ENCODE measurements at regions of chrX and their contacts with region 1.

Region 1: GRCh38 chrX:130575831-130576389 is 174.1 kb downstream of the RBMX2 start:
- DNase-seq: peak; percentile 21
- H3K4me3 Mint-ChIP-seq: no peak overlapping the region
- H3K27ac Mint-ChIP-seq: no peak overlapping the region
- H3K4me1 Mint-ChIP-seq: no peaks in the 10 kb centered on the region
- H3K27me3 Mint-ChIP-seq: no peaks in the 10 kb centered on the region
- CTCF ChIP-seq: peak; percentile 78

Region 2: DNA sequence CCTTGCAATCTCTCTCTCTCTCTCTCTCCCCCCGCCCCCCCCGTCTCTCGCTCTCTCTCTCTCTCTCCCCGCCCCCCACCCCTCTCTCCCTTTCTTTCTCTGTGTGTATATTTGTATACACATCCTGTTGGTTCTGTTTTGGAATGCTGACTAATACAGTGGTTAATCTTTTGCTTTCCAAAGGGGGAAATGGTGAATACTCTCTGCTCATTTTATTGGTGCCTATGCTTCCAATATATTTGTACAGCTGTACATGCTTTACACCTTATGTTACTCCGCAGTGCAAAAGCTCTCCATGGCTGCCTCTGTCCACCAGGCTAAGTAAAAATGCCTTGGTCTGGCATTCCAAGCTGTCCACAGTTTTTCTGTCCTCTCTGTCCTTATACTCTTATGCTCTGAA is 15.4 kb before region 1 on chrX:
- CTCF ChIA-PET with region 1: interaction called, 11 read pairs
- intact Hi-C with region 1: no loop called
- DNase-seq: no peak
- H3K4me3 Mint-ChIP-seq: peak overlapping the region; percentile 33
- H3K27ac Mint-ChIP-seq: peak overlapping the region; percentile 80
- H3K4me1 Mint-ChIP-seq: peaks cover 54% of the 10 kb centered on the region
- H3K27me3 Mint-ChIP-seq: no peaks in the 10 kb centered on the region
- CTCF ChIP-seq: no peak

Region 3: DNA sequence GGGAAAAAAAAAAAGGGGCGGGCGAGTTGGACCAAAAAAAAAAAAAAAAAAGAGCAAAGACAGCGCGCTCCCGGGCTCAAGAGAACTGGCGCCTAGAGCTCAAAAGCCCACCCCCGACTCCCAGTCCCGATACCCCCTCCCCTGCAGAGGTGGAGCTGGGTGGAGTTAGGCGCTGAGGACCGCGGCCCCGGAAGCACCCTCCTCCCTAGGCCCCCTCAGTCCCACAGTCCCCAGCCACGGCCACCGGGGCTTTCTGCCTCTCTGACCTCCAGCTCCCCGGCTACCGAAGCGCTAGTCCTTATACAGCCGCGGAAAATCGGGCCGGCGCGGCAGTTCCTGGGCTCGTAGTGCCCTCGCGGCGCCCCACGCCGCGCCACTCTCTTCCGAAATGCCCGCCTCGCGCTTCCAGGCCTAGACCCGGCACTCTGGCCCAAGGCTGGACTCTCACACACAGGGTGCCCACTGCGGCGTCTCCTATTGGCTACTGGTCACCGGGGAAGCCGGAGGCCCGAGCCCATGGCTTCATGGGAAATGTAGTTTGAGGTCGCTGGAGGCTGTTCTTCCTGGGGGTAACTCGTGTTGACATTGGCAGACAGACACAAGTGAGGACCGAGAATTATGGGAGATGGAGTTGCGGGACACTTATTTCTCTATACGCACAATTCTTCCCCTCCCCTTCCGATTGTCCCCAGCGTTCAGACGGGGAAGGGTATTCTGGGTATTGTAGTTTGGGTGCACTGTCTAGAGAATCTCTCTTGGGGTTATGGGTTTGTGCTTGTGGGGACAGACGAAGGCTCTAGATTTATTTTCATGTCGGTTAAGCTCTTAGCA is 327.1 kb after region 1 on chrX and contains the start of gene ENOX2:
- CTCF ChIA-PET with region 1: interaction called, 3 read pairs
- intact Hi-C with region 1: loop called (anchors 10 kb)
- DNase-seq: peak; percentile 92
- H3K4me3 Mint-ChIP-seq: no peak within 1 kb of the TSS
- H3K27ac Mint-ChIP-seq: peak within 1 kb of the TSS; percentile 76
- H3K4me1 Mint-ChIP-seq: peaks cover 9% of the 10 kb centered on the region
- H3K27me3 Mint-ChIP-seq: no peaks in the 10 kb centered on the region
- CTCF ChIP-seq: no peak
- total RNA-seq, gene ENOX2: 23.4 and 28.9 TPM in 2 replicates

Region 4: DNA sequence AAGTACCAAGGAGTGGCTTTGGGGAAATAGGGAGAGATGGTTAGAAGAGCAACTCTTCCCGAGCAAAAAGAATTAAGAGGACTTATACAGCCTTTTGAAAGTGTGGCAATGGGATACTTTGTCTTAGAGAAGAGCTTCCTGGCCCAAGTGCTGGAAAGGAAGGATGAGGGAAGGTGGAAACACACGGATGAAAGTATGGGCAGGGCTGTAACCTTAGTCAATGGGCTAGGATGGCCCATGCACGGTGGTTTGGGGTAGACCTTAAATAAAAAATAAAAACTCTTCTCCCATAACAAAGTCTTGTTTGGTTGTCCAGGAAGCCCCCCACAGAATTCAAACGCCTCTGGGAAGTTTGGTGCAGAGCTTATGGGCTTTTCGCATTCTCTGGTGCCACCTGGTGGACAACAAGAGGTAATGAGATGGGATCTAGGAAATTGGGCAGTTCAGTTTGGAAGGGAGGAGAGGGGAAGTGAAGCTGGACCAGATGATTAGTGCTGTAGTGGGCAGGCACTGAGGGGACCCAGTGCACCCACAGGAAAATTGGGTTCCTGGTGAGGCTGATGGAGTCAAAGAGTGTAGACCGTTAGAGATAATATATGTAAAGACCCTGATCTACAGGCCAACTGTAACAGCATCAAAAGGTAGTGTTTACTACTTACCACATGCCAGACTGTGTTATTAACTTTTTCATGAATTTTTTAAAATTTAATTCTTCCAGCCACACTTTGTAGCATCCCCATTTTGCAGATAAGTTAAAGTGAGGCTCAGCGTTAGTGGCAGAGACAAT is 340.9 kb after region 1 on chrX:
- CTCF ChIA-PET with region 1: interaction called, 13 read pairs
- intact Hi-C with region 1: no loop called
- DNase-seq: peak; percentile 42
- H3K4me3 Mint-ChIP-seq: no peak overlapping the region
- H3K27ac Mint-ChIP-seq: no peak overlapping the region
- H3K4me1 Mint-ChIP-seq: no peaks in the 10 kb centered on the region
- H3K27me3 Mint-ChIP-seq: peaks cover 26% of the 10 kb centered on the region
- CTCF ChIP-seq: peak; percentile 72